BJ (cell line): ENCODE measurements at regions of chr11 and their contacts with region 1.

Region 1: DNA sequence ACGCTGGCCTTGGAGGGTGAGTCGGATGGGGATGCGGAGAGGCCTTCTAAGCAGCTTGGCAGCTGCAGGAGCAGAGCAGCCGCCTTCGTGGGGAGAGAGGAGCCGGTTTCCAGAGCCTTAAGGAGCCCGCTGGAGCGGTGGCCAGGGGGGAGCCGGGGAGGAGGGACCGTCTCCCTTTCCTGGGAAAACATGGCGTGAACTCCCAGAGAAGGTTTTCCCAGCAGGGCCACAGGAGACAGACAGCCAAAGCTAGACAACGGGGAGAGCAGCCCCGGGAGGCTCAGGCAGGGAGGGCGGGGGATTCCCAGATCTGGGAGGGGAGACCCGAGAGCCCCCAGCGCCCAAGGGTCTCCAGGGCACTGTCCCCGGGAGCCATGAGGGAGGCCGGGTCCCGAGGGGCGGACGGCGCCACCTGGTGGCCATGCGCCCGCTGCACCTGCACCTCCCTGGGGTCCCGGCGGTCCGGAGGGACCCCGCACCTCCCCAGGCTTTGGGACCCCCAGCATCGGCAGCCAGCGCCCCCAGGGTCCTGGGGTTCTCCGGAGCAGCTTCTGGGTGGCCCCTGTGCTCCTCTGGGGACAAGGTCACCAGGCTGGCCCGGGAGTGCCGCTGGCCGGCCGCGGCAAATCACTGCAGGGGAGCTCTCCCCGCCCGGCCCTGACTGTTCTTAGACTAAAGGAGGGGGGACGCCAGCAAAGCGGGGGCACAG is 2.4 kb upstream of the SYT8 start:
- DNase-seq: no peak
- H3K4me3 ChIP-seq: no peak overlapping the region
- H3K27me3 ChIP-seq: peaks cover 2% of the 10 kb centered on the region; the same call in 1 of the 2 replicates
- CTCF ChIP-seq: peak; percentile 95

Region 2: DNA sequence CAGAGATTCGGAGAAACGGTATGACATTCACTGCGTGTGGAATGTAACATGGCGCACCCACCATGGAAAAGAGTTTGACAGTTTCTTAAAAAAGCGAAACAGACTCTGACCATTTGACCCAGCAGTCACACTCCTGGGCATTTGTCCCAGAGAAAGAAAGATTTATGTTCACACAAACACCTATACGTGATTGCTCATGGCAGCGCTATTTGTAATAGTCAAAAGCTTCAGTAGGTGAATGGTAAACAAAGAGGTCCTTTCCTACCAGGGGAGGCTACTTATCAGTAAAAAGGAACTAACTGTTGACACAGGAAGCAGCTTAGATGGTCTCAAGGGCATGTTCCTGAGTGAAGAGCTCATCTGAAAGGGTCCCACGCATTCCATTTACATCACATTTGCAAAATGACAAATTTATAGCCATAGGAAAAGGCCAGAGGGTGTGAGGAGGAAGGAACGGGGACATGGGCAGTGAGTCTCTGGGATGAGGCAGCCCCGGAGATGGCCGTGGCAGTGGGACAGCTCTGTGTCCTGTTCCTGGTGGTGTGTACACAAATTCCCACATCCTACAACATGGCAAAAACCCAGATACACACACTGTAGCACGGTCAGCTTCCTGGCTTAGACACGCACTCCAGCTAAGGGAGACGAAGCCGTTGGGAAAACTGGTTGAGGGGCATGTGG is 150.0 kb before region 1 on chr11:
- CTCF ChIA-PET with region 1: interaction called, 34 read pairs
- POLR2A ChIA-PET with region 1: no interaction called
- DNase-seq: no peak
- H3K4me3 ChIP-seq: no peak overlapping the region
- H3K27me3 ChIP-seq: no peaks in the 10 kb centered on the region
- CTCF ChIP-seq: no peak

Region 3: DNA sequence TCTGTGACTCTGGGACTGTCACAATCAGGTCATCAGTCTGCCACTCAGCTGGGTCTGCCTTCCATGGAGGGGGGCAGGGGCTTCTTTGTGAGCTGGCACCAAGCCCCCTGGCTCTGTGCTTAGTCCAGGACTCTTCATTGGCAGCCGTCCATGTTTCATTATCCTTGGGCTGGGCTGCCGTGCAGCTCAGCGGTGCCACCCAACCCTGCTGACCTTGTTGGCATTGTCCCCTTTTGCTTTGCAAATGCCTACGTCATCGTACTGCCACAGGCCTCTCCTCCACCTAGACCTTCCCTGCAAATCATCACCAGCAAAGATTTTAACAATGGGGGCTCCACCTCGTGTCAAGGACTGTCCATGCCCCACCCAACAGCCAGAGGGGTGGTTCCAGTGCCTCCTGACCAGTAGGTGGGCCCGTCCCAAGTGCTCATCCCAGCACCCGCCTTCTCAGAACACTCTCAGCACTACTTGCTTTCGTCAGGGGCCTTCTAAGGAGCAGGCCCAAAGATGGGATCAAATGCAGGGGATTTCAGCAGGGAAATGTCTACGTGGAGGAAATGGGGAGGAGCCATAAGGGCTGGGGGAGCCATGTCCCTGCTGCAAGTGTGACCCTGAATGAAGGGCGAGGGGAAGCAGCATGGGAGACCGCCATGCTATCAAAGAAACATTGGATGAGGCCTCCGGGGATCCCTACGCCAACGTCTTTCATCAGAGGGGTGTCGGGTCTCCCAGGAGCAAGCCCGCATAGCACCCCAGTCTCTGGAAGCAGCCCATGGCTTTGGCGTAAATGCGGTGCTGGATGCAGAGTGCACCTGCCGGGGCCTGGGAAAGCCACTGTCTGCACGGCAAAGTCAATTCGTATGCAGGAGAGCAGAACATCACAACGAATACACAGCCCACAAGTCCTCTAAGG is 117.1 kb before region 1 on chr11:
- CTCF ChIA-PET with region 1: interaction called, 10 read pairs
- POLR2A ChIA-PET with region 1: no interaction called
- DNase-seq: no peak
- H3K4me3 ChIP-seq: no peak overlapping the region
- H3K27me3 ChIP-seq: no peaks in the 10 kb centered on the region
- CTCF ChIP-seq: no peak

Region 4: DNA sequence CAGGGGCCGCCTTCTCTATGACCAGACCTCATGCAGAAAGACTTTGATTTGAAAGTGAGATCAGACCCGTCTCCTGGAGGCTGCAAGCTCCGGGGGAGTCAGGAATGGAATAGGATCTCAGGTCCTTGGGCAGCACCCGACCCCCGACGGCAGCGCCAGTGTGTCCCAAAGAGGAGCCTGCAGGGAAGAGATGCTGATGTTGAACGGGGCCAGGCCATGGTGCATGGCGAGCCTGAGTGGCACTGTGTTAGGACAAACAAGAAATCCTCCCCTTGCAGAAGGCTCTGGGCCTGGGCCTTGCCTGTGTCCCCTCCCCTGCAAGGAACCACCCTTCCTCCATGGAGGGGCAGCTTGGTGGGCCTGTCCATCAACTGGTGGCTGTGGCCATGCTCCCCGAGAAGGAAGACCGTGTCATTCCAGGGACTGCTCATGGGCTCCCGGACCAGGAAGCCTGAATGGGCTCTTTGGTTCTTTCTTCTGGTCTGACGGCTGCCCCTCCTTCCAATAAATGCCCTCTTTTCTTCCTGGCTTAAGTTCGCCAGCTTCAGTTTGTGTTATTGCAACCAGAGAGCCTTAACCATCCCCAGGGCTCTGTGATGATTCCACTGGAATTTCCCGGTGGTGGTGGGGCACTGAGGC is 17.6 kb before region 1 on chr11:
- CTCF ChIA-PET with region 1: interaction called, 23 read pairs
- POLR2A ChIA-PET with region 1: no interaction called
- DNase-seq: no peak
- H3K4me3 ChIP-seq: no peak overlapping the region
- H3K27me3 ChIP-seq: peaks cover 7% of the 10 kb centered on the region
- CTCF ChIP-seq: no peak

Region 5: GRCh38 chr11:1882519-1883238 is 50.3 kb after region 1 on chr11:
- CTCF ChIA-PET with region 1: interaction called, 14 read pairs
- POLR2A ChIA-PET with region 1: no interaction called
- DNase-seq: no peak
- H3K4me3 ChIP-seq: no peak overlapping the region
- H3K27me3 ChIP-seq: no peaks in the 10 kb centered on the region; the same call in none of the 2 replicates
- CTCF ChIP-seq: peak; percentile 94

Region 6: DNA sequence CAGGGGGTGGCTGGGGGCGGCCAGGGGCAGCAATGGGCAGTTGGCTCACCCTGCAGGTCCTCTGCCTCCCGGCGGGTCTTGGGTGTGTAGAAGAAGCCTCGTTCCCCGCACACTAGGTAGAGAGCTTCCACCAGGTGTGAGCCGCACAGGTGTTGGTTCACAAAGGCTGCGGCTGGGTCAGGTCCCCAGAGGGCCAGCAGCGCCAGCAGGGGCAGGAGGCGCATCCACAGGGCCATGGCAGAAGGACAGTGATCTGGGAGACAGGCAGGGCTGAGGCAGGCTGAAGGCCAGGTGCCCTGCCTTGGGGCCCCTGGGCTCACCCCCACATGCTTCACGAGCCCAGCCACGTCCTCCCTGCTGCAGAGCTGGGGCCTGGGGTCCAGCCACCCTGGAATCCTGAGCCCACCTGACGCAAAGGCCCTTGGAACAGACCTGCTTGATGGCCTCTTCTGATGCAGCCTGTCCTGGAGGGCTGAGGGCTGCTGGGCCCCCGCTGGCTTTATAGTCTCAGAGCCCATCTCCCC is 328.4 kb after region 1 on chr11 and contains the start of gene INS:
- CTCF ChIA-PET with region 1: interaction called, 30 read pairs
- POLR2A ChIA-PET with region 1: no interaction called
- DNase-seq: no peak
- H3K4me3 ChIP-seq: no peak within 1 kb of the TSS
- H3K27me3 ChIP-seq: no peaks in the 10 kb centered on the region
- CTCF ChIP-seq: no peak
- polyA plus RNA-seq, gene INS: not detected in 2 replicates